ENCODE measurements at regions of chr6 and their contacts with region 1.

Region 1: GRCh38 chr6:73204252-73204651 is 21.0 kb downstream of the KHDC1L start:
- DNase-seq: no peak

Region 2: DNA sequence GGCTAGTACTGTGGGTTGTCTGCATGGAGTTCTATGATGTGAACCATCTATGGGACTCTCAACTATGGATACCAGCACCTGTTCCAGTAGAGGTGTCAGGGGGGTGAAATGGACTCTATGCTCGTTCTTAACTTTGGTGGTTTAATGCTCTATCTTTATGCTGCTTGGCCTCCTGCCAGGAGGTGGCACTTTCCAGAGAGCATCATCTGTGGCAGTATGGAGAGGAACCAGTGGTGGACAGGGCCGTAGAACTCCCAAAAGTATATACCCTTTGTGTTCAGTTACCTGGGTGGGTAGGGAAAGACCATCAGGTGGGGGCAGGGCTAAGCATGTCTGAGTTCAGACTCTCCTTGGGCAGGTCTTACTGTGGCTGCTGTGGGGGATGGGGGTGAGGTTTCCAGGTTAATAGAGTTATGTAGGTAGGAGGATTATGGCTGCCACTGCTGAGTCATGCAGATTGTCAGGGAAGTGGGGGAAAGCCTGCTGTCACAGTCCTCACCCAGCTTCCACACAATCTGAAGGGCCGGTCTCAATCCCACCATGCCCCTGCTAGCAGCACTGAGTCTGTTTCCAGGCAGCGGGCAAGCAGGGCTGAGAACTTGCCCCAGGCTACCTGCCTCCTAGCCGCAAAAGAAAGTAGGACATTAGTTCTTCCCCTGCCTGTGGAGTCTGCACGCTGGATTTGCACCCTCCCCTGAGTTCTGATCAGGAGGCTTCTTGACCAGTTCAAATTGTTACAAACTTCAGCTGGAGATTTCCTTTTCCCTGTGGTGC is 298.4 kb before region 1 on chr6:
- CTCF ChIA-PET with region 1: no interaction called
- POLR2A ChIA-PET with region 1: no interaction called
- DNase-seq: no peak

Region 3: GRCh38 chr6:73134588-73134987 is 69.7 kb before region 1 on chr6:
- CTCF ChIA-PET with region 1: no interaction called
- POLR2A ChIA-PET with region 1: no interaction called
- DNase-seq: peak; percentile 11

Region 4: GRCh38 chr6:73231986-73232391 is 27.7 kb after region 1 on chr6:
- CTCF ChIA-PET with region 1: no interaction called
- POLR2A ChIA-PET with region 1: no interaction called
- DNase-seq: no peak

Region 5: DNA sequence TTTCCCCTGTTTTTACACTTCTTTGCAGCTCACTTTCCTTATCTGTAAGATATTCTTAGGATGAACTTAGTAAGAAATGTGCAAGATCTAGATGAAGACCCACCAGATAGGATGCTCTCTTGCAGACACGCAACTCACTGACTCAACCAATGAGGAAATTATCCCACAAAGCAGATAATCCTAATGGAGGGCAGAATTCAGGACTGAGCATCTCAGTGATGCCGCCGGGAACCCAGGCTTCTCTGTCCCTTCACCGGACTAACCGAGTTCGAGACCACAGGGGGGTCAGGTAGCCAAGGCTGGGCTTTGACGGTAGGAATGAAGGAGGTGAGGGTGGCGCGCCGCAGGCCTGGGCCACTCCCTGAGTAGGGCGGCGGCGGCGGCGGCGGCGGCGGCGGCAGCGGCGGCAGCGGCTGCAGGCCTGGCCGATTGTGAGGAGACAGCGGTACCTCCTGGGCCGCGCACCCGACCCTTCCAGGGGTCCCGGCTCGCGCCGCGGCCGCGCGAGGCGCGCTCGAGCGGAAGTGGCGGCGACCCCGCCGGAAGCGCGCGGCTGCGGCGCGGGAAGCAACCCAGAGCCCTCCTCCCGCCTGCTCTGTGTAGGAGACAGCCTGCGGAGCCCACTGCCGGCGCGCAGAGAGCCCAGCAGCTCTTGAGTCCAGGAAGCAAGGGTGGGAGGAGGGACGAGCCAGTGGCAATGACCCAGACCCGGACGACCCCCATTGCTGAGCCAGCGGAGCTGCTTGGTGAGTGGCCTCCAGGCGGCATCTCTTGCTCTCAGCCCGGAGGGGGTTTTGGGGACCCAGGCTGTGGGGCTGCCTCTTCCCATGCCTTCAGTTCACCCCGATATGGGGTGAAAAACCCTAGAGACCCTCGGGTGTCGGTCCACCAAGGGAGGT is 58.7 kb after region 1 on chr6 and contains the start of gene KHDC1:
- CTCF ChIA-PET with region 1: no interaction called
- POLR2A ChIA-PET with region 1: no interaction called
- DNase-seq: peak; percentile 81

Region 6: GRCh38 chr6:73388800-73389512 is 184.7 kb after region 1 on chr6:
- CTCF ChIA-PET with region 1: interaction called, 10 read pairs
- POLR2A ChIA-PET with region 1: no interaction called
- DNase-seq: peak; percentile 76